Endothelial cell of umbilical vein (primary cell): ENCODE measurements at regions of chr1 and their contacts with region 1.

Region 1: DNA sequence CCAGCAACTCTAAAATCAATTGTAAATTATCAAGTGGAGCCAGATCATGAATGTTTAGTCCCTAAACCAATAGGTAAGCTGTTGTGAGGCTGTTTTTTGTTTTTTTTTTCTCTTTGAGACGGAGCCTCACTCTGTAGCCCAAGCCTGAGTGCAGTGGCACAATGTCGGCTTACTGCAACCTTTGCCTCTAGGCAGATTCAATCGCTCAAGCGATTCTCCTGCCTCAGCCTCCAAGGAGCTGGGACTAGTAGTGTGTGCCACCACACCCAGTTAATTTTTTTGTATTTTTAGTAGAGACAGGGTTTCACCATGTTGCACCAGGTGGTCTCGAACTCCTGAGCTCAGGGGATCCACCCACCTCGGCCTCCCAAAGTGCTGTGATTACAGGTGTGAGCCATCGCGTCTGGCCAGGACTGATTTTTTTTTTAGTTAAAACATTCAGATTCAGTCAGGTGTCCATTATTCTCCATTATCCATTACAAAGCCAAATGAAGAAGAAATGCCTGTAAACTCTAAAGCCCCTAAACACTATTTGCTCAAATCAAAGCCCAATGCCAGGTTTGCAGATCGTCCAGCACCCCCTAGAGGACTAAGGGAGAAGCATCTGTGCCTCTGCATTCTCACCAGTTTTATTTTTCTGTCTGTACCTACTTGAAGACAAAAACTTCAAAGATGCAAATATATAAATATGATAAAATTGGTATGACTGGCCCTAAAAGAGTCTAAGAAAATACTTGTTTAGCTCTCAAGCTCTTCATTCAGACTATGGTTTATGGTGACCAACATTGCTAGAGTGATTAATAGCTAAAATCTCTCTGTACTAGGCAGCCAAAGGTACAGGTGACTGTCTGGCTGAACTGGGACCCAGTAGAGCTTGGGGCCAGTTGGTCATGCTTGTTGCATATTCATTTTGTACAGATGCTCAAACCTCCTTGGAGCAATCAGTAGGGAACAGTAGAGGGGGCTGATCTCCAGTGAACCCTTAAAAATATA is 138.6 kb downstream of the SYT2 start:
- DNase-seq: peak; percentile 54
- H3K4me3 ChIP-seq: no peak overlapping the region
- H3K27ac ChIP-seq: no peak overlapping the region
- H3K4me1 ChIP-seq: peaks cover 4% of the 10 kb centered on the region
- H3K27me3 ChIP-seq: no peaks in the 10 kb centered on the region
- CTCF ChIP-seq: peak; percentile 78 to 82
- POLR2A ChIP-seq: no peak

Region 2: GRCh38 chr1:202348509-202349205 is 223.0 kb before region 1 on chr1 and contains the start of gene PPP1R12B:
- CTCF ChIA-PET with region 1: interaction called, 4 read pairs
- POLR2A ChIA-PET with region 1: no interaction called
- dilution Hi-C with region 1: no loop called
- intact Hi-C with region 1: loop called (anchors 2 kb)
- DNase-seq: peak; percentile 99
- H3K4me3 ChIP-seq: peak within 1 kb of the TSS; percentile 44 to 75 (median 55)
- H3K27ac ChIP-seq: peak within 1 kb of the TSS; percentile 52
- H3K4me1 ChIP-seq: peaks cover 7% of the 10 kb centered on the region
- H3K27me3 ChIP-seq: no peaks in the 10 kb centered on the region
- CTCF ChIP-seq: no peak
- POLR2A ChIP-seq: peak; percentile 71
- total RNA-seq, gene PPP1R12B: 11.5 and 11.6 TPM in 2 replicates

Region 3: GRCh38 chr1:202501281-202501680 is 70.4 kb before region 1 on chr1:
- CTCF ChIA-PET with region 1: interaction called, 12 read pairs
- POLR2A ChIA-PET with region 1: no interaction called
- dilution Hi-C with region 1: no loop called
- intact Hi-C with region 1: loop called (anchors 1 kb)
- DNase-seq: peak; percentile 32
- H3K4me3 ChIP-seq: no peak overlapping the region
- H3K27ac ChIP-seq: no peak overlapping the region
- H3K4me1 ChIP-seq: no peaks in the 10 kb centered on the region
- H3K27me3 ChIP-seq: no peaks in the 10 kb centered on the region
- CTCF ChIP-seq: peak in 1 of 2 donors; percentile 12
- POLR2A ChIP-seq: no peak

Region 4: GRCh38 chr1:202589190-202590030 is 17.8 kb after region 1 on chr1:
- CTCF ChIA-PET with region 1: interaction called, 38 read pairs
- POLR2A ChIA-PET with region 1: interaction called, 5 read pairs
- dilution Hi-C with region 1: no loop called
- intact Hi-C with region 1: no loop called
- DNase-seq: peak; percentile 91
- H3K4me3 ChIP-seq: no peak overlapping the region
- H3K27ac ChIP-seq: peak overlapping the region; percentile 92
- H3K4me1 ChIP-seq: peaks cover 51% of the 10 kb centered on the region
- H3K27me3 ChIP-seq: no peaks in the 10 kb centered on the region
- CTCF ChIP-seq: no peak
- POLR2A ChIP-seq: peak; percentile 22